ENCODE measurements at regions of chr17 and their contacts with region 1.

Region 1: GRCh38 chr17:78140169-78140976 is 5.8 kb upstream of the C17orf99 start:
- H3K4me3 ChIP-seq: no peak overlapping the region
- H3K27ac ChIP-seq: no peak overlapping the region; the same call in 1 of the 2 replicates
- H3K4me1 ChIP-seq: peaks cover 4% of the 10 kb centered on the region
- CTCF ChIP-seq: no peak

Region 2: DNA sequence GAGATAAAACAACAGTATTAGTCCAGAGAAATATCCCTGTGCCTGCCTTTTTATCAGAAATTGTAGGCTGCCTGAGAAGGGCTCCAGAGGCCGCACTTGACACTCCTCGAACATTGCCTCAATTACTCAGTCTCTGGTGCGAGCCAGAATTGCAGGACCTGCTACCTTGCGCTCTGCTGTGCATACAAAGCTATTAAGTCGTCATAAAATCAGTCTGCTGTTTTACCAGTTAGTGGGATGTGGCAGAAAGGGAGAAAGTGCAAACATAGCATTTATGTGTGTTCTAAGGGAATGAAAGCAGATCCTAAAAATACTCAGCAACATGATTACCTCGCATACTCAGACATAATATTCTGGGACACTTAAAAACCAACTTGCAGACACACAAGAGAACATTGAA is 82.4 kb before region 1 on chr17:
- CTCF ChIA-PET with region 1: no interaction called
- POLR2A ChIA-PET with region 1: no interaction called
- H3K4me3 ChIP-seq: no peak overlapping the region
- H3K27ac ChIP-seq: no peak overlapping the region
- H3K4me1 ChIP-seq: no peaks in the 10 kb centered on the region; the same call in none of the 2 replicates
- CTCF ChIP-seq: no peak

Region 3: DNA sequence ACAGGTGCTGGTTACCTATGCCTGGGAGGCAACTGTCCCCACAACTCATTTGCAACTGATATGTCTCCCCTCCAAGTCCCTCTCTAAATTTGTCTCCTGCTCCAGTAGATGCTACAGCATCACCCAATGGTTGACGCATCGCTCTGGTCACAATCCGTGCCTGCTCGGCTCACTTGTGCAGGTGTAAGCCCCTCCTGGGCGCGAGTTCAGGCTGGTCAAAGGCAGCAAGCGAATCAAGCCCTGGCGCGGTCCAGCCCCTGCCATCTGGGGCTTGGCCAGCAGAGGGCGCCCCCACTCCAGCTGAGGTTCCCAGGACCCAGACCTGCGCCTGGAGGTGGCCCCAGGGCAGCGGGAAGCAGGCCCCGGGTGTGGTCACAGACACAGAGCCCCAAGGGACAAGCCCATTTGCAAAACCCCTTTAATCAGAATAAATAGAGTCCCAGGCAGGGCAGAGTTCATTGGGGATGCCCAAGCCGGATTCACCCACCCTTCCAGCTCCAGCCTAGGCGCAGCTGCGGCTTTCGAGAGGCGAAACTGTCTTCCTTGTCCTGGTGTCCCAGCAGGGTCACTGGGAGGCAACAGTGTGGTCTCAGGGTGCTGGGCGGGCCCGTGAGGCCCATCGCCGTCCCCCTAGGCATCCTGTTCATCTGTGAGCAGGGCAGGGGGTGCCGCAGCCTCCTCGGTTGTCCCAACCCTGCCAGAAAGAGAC is 27.7 kb before region 1 on chr17:
- CTCF ChIA-PET with region 1: interaction called, 15 read pairs
- POLR2A ChIA-PET with region 1: interaction called, 3 read pairs
- H3K4me3 ChIP-seq: no peak overlapping the region
- H3K27ac ChIP-seq: no peak overlapping the region
- H3K4me1 ChIP-seq: no peaks in the 10 kb centered on the region
- CTCF ChIP-seq: peak; percentile 96

Region 4: GRCh38 chr17:78128551-78129350 is 11.6 kb before region 1 on chr17 and contains the start of gene TMC6:
- CTCF ChIA-PET with region 1: interaction called, 10 read pairs
- POLR2A ChIA-PET with region 1: interaction called, 13 read pairs
- H3K4me3 ChIP-seq: peak within 1 kb of the TSS; percentile 62
- H3K27ac ChIP-seq: peak within 1 kb of the TSS; percentile 37; the same call in 1 of the 2 replicates
- H3K4me1 ChIP-seq: peaks cover 6% of the 10 kb centered on the region; the same call in 1 of the 2 replicates
- CTCF ChIP-seq: no peak

Region 5: DNA sequence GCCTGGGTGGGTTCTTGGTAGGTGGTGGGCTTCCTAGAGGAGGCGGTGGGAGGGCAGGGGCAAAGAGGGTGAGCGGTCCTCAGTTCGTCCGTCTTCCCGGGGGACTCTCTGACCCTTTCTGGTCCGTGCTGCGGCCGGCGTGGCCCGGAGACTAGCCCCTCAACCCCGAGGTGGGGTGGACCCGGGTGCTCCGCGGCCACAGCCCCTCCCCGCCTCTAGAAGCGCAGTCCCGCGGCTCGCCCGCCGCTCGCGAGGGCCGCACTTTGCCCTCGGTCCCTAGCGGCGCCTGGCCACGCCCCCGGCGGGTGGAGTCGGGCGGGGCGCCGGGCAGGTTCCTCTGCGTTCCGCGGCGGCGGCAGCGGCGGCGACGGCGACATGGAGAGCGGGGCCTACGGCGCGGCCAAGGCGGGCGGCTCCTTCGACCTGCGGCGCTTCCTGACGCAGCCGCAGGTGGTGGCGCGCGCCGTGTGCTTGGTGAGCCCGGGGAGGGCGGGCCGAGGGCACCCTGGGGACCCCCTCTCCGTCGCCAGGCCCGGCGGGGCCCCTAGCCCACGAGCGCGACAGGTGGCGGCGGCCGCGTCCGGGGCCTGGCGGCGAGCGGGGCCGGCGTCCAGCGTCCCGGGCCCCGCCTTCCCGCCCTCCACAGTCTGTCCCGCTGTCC is 28.0 kb after region 1 on chr17 and contains the start of gene SYNGR2:
- CTCF ChIA-PET with region 1: interaction called, 7 read pairs
- POLR2A ChIA-PET with region 1: interaction called, 12 read pairs
- H3K4me3 ChIP-seq: peak within 1 kb of the TSS; percentile 67
- H3K27ac ChIP-seq: peak within 1 kb of the TSS; percentile 78; the same call in 1 of the 2 replicates
- H3K4me1 ChIP-seq: no peaks in the 10 kb centered on the region; the same call in 1 of the 2 replicates
- CTCF ChIP-seq: 0 out of 2 replicates have a peak, but pooled peaks have one; percentile 17

Region 6: GRCh38 chr17:78176548-78177025 is 36.2 kb after region 1 on chr17:
- CTCF ChIA-PET with region 1: interaction called, 15 read pairs
- POLR2A ChIA-PET with region 1: interaction called, 9 read pairs
- H3K4me3 ChIP-seq: no peak overlapping the region
- H3K27ac ChIP-seq: no peak overlapping the region
- H3K4me1 ChIP-seq: no peaks in the 10 kb centered on the region; the same call in 1 of the 2 replicates
- CTCF ChIP-seq: peak; percentile 90

Region 7: DNA sequence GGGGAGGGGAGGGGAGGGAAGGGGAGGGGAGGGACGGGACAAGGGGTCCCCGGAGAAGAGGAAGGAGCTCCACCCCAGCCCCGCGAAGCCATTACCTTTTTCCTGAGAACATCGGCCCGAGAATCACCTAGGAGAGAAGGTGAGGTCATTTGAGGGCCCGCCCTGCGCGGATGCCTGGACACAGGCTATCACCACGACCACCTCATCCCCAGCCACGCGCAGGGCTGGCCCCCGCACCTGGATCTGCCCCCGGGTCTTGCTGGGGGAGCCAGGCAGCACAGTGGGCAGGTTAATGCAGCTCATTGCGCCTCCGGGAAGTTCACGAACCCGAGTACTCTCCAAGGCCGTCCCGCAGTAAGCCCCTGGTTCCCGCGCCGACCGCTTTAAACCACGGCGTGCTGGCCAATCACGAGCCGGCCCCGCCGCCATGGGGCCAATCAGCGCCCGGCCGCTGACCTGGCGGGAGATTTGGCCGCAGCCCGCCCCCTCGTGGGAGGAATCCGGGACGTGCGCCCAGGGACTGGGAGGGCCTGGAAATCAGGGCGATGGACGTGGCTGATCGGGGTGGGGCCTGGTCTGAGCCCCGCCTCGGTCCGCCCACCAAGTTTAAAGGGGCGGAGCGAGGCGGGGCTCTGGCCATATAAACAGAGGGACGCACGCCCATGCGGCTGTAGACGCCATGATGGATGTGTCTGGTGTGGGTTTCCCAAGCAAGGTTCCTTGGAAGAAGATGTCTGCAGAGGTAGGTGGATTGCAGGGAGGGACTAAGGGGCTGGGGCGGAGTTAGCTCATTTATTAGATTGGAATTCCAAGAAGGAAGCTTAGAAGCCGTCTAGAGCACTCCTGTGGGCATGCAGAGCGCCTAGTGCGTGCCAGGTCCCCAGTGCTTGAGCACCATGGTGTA is 46.6 kb after region 1 on chr17 and contains the starts of genes AFMID and TK1:
- CTCF ChIA-PET with region 1: interaction called, 8 read pairs
- POLR2A ChIA-PET with region 1: interaction called, 27 read pairs
- H3K4me3 ChIP-seq: peak within 1 kb of the TSS; percentile 53
- H3K27ac ChIP-seq: peak within 1 kb of the TSS; percentile 72
- H3K4me1 ChIP-seq: peaks cover 2% of the 10 kb centered on the region
- CTCF ChIP-seq: peak; percentile 99